Activated naive CD4-positive, alpha-beta T cell treated with anti-CD3 and anti-CD28 coated beads for 36 hours (primary cell): ENCODE measurements at regions of chr7 and their contacts with region 1.

Region 1: GRCh38 chr7:47991741-47992311 is 12.4 kb upstream of the HUS1 start:
- DNase-seq: peak; percentile 94
- H3K4me3 Mint-ChIP-seq: peak overlapping the region; percentile 92
- H3K27ac Mint-ChIP-seq: peak overlapping the region; percentile 93
- H3K4me1 Mint-ChIP-seq: peaks cover 16% of the 10 kb centered on the region
- H3K27me3 Mint-ChIP-seq: no peaks in the 10 kb centered on the region

Region 2: GRCh38 chr7:47979145-47979831 is 12.5 kb before region 1 on chr7 and contains the start of gene HUS1:
- CTCF ChIA-PET with region 1: interaction called, 8 read pairs
- intact Hi-C with region 1: loop called (anchors 1 kb)
- DNase-seq: peak; percentile 94
- H3K4me3 Mint-ChIP-seq: peak within 1 kb of the TSS; percentile 90
- H3K27ac Mint-ChIP-seq: peak within 1 kb of the TSS; percentile 94
- H3K4me1 Mint-ChIP-seq: peaks cover 28% of the 10 kb centered on the region
- H3K27me3 Mint-ChIP-seq: no peaks in the 10 kb centered on the region
- total RNA-seq, gene HUS1: 55.0 to 61.2 TPM

Region 3: GRCh38 chr7:48035301-48035966 is 43.6 kb after region 1 on chr7 and contains the start of gene C7orf57:
- CTCF ChIA-PET with region 1: interaction called, 3 read pairs
- intact Hi-C with region 1: loop called (anchors 1 kb)
- DNase-seq: peak; percentile 86
- H3K4me3 Mint-ChIP-seq: peak within 1 kb of the TSS; percentile 77
- H3K27ac Mint-ChIP-seq: no peak within 1 kb of the TSS
- H3K4me1 Mint-ChIP-seq: peaks cover 7% of the 10 kb centered on the region
- H3K27me3 Mint-ChIP-seq: peaks cover 24% of the 10 kb centered on the region
- total RNA-seq, gene C7orf57: 0.29 to 0.44 TPM

Region 4: GRCh38 chr7:48088559-48089045 is 96.8 kb after region 1 on chr7:
- CTCF ChIA-PET with region 1: interaction called, 20 read pairs
- intact Hi-C with region 1: loop called (anchors 1 kb)
- DNase-seq: no peak
- H3K4me3 Mint-ChIP-seq: peak overlapping the region; percentile 84
- H3K27ac Mint-ChIP-seq: peak overlapping the region; percentile 92
- H3K4me1 Mint-ChIP-seq: peaks cover 75% of the 10 kb centered on the region
- H3K27me3 Mint-ChIP-seq: no peaks in the 10 kb centered on the region

Region 5: GRCh38 chr7:48101968-48102367 is 110.1 kb after region 1 on chr7:
- CTCF ChIA-PET with region 1: interaction called, 101 read pairs
- intact Hi-C with region 1: loop called (anchors 1 kb)
- DNase-seq: peak; percentile 46
- H3K4me3 Mint-ChIP-seq: no peak overlapping the region
- H3K27ac Mint-ChIP-seq: peak overlapping the region; percentile 21
- H3K4me1 Mint-ChIP-seq: peaks cover 35% of the 10 kb centered on the region
- H3K27me3 Mint-ChIP-seq: no peaks in the 10 kb centered on the region

Region 6: GRCh38 chr7:48154792-48155413 is 163.1 kb after region 1 on chr7:
- CTCF ChIA-PET with region 1: interaction called, 3 read pairs
- intact Hi-C with region 1: loop called (anchors 1 kb)
- DNase-seq: peak; percentile 55
- H3K4me3 Mint-ChIP-seq: no peak overlapping the region
- H3K27ac Mint-ChIP-seq: no peak overlapping the region
- H3K4me1 Mint-ChIP-seq: no peaks in the 10 kb centered on the region
- H3K27me3 Mint-ChIP-seq: peaks cover 21% of the 10 kb centered on the region

Region 7: DNA sequence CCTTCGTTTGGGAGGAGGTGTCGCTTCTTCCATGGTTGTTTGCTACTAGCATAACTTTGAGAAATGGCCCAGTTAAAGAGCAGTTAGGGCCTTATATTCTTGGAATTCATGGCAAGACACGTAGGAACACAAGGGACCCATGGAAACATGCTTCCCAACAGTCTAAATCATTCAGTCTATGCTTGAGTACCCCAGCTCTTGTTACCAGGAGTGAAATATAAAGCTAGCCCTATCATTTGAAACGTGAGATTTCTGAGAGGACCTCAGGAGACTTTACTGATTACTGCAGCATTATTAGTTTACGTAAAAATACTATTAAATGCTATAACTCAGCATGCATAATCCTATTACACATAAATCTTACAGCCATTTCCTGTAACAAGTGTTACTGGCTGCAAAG is 603.9 kb after region 1 on chr7:
- CTCF ChIA-PET with region 1: no interaction called
- intact Hi-C with region 1: no loop called
- DNase-seq: no peak
- H3K4me3 Mint-ChIP-seq: no peak overlapping the region
- H3K27ac Mint-ChIP-seq: no peak overlapping the region
- H3K4me1 Mint-ChIP-seq: no peaks in the 10 kb centered on the region
- H3K27me3 Mint-ChIP-seq: no peaks in the 10 kb centered on the region